Activated CD4-positive, alpha-beta memory T cell treated with anti-CD3 and anti-CD28 coated beads for 36 hours (primary cell): ENCODE measurements at regions of chr18 and their contacts with region 1.

Region 1: GRCh38 chr18:47175908-47176575 is at the start of gene IER3IP1:
- DNase-seq: peak; percentile 94
- H3K4me3 Mint-ChIP-seq: no peak within 1 kb of the TSS
- H3K27ac Mint-ChIP-seq: peak within 1 kb of the TSS; percentile 66
- H3K4me1 Mint-ChIP-seq: peaks cover 2% of the 10 kb centered on the region
- H3K27me3 Mint-ChIP-seq: no peaks in the 10 kb centered on the region
- total RNA-seq, gene IER3IP1: 10.9 to 11.0 TPM

Region 2: GRCh38 chr18:47150029-47150823 is 25.8 kb before region 1 on chr18 and contains the start of gene HDHD2:
- CTCF ChIA-PET with region 1: interaction called, 3 read pairs
- POLR2A ChIA-PET with region 1: interaction called, 3 read pairs
- intact Hi-C with region 1: loop called (anchors 1 kb)
- DNase-seq: peak; percentile 88
- H3K4me3 Mint-ChIP-seq: peak within 1 kb of the TSS; percentile 89
- H3K27ac Mint-ChIP-seq: peak within 1 kb of the TSS; percentile 91
- H3K4me1 Mint-ChIP-seq: peaks cover 33% of the 10 kb centered on the region
- H3K27me3 Mint-ChIP-seq: no peaks in the 10 kb centered on the region
- total RNA-seq, gene HDHD2: 26.4 to 32.9 TPM